Adrenal gland (tissue), 19 donors: ENCODE measurements at regions of chr1 and their contacts with region 1.

Region 1: DNA sequence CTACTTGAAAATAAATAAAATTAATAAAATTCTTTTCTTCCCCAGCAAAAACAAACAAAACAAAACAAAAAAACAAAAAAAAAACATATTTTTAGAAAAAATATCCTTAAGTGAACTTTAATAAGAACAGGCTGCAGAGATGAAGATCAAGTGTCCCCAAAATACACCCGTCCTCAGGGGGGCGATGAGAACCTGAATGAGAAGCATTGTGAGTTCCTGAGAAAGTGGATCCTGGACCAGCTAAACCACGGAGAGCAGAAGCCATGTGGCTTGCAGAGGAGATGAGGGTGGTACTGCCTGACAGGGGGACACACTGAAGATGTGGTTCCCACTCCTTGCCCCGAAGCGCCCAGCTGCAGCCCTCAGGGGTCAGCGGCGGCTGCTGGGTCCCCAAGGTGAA is 89.3 kb downstream of the ITPKB start:
- DNase-seq: peak in 5 of 7 donors; percentile 42 to 68 (median 51)
- H3K4me3 ChIP-seq: no peak overlapping the region
- H3K27ac ChIP-seq: no peak overlapping the region
- H3K4me1 ChIP-seq: peaks cover 0 to 5% of the 10 kb centered on the region in 2 donors
- H3K27me3 ChIP-seq: no peaks in the 10 kb centered on the region
- CTCF ChIP-seq: peak in 5 of 6 experiments; percentile 14 to 50 (median 35)
- POLR2A ChIP-seq: no peak

Region 2: DNA sequence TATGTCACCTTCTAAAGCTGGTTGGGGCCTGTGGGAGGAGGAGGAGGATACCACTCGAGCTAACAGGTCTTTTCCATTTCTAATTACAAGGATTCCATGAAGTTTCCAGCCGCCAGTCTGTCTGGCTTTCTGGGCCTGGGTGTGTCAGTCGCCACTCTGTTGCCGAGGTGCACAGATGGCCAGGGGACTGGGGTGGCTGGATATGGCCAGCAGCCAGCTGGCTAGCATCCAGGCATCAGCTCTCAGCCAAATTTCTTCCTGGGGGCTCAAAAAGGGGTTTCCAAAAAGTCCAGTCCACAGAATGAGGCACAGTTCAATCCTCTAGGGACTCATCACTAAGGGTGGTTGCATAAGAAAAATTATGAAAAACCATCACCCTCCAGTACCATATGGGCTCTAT is 56.9 kb after region 1 on chr1:
- intact Hi-C with region 1: no loop called
- DNase-seq: no peak
- H3K4me3 ChIP-seq: no peak overlapping the region
- H3K27ac ChIP-seq: no peak overlapping the region
- H3K4me1 ChIP-seq: peaks cover 7 to 25% of the 10 kb centered on the region in 2 donors
- H3K27me3 ChIP-seq: no peaks in the 10 kb centered on the region
- CTCF ChIP-seq: no peak
- POLR2A ChIP-seq: no peak

Region 3: GRCh38 chr1:226736908-226737818 is 87.4 kb after region 1 on chr1:
- intact Hi-C with region 1: loop called in 1 of 2 experiments (anchors 10 kb)
- DNase-seq: peak in 5 of 7 donors; percentile 22 to 36 (median 33)
- H3K4me3 ChIP-seq: peak overlapping the region in 2 of 4 donors; percentile 40 to 65
- H3K27ac ChIP-seq: peak overlapping the region in 3 of 5 donors; percentile 18 to 86 (median 71)
- H3K4me1 ChIP-seq: peaks cover 0 to 30% of the 10 kb centered on the region in 2 donors
- H3K27me3 ChIP-seq: no peaks in the 10 kb centered on the region
- CTCF ChIP-seq: peak in 1 of 6 experiments; percentile 1
- POLR2A ChIP-seq: no peak

Region 4: DNA sequence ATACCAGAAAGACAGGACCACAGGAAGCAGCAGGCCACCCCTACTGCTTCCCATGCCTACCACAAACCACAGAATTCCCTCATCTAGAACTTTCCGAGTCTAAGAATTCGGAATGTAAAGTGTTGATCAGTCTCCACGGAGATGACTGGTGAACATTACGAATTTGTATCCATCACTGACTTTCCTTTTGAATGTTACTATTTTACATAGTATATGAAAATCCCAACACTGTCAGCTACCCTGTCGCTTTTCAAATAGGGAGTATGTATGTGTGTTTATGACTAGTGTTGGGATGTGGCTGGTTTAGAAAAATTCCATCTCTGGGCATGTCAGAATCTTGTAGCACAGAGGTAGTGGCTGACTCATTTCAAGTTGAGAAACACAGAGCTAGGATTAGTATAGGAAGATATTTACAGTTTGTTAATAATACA is 408.6 kb after region 1 on chr1:
- intact Hi-C with region 1: no loop called
- DNase-seq: no peak
- H3K4me3 ChIP-seq: no peak overlapping the region
- H3K27ac ChIP-seq: no peak overlapping the region
- H3K4me1 ChIP-seq: no peaks in the 10 kb centered on the region
- H3K27me3 ChIP-seq: no peaks in the 10 kb centered on the region
- CTCF ChIP-seq: no peak
- POLR2A ChIP-seq: no peak